Naive thymus-derived CD4-positive, alpha-beta T cell (primary cell): ENCODE measurements at regions of chr1 and their contacts with region 1.

Region 1: GRCh38 chr1:1615256-1616044 is at the start of gene MIB2:
- DNase-seq: peak; percentile 98 to 100 (median 99)
- ATAC-seq: peak; percentile 94
- H3K4me3 ChIP-seq: peak within 1 kb of the TSS; percentile 74
- H3K4me3 Mint-ChIP-seq: peak within 1 kb of the TSS; percentile 93 to 99 (median 96)
- H3K27ac ChIP-seq: peak within 1 kb of the TSS; percentile 100
- H3K27ac Mint-ChIP-seq: peak within 1 kb of the TSS; percentile 94 to 100 (median 99)
- H3K4me1 ChIP-seq: peaks cover 15 to 21% of the 10 kb centered on the region in 2 donors
- H3K4me1 Mint-ChIP-seq: peaks cover 18 to 36% (median 32%) of the 10 kb centered on the region in 7 donors
- H3K27me3 ChIP-seq: no peaks in the 10 kb centered on the region
- H3K27me3 Mint-ChIP-seq: no peaks in the 10 kb centered on the region
- total RNA-seq, gene MIB2: 45.6 to 129 (median 65.7) TPM

Region 2: DNA sequence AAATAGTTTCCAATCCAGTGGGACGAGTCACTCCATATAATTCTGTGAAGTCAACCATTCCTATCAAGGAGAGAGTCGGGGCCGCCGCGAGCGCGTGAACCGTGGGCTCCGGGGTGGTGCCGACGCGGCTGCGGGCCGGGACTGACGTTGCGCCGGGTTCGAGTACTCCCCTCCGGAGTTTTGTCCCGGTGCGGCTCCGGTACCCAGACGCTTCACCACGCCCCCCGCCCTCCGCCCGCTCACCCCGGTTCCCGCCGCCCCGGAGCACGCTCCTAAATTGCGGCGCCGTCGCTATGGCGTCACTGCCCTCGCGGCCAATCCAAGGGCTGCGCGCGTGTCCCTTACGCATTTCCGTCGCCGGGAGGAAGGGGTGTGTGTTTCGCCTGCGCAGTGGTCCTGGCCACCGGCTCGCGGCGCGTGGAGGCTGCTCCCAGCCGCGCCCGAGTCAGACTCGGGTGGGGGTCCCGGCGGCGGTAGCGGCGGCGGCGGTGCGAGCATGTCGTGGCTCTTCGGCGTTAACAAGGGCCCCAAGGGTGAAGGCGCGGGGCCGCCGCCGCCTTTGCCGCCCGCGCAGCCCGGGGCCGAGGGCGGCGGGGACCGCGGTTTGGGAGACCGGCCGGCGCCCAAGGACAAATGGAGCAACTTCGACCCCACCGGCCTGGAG is 143.9 kb before region 1 on chr1 and contains the start of gene ATAD3B:
- CTCF ChIA-PET with region 1: no interaction called
- POLR2A ChIA-PET with region 1: no interaction called
- intact Hi-C with region 1: loop called in 1 of 2 experiments (anchors 2 kb)
- DNase-seq: peak; percentile 80 to 95 (median 88)
- ATAC-seq: peak; percentile 98
- H3K4me3 ChIP-seq: peak within 1 kb of the TSS; percentile 68
- H3K4me3 Mint-ChIP-seq: peak within 1 kb of the TSS; percentile 78 to 97 (median 89)
- H3K27ac ChIP-seq: peak within 1 kb of the TSS; percentile 90
- H3K27ac Mint-ChIP-seq: peak within 1 kb of the TSS; percentile 77 to 98 (median 92)
- H3K4me1 ChIP-seq: peaks cover 9 to 14% of the 10 kb centered on the region in 2 donors
- H3K4me1 Mint-ChIP-seq: peaks cover 6 to 39% (median 25%) of the 10 kb centered on the region in 7 donors
- H3K27me3 ChIP-seq: no peaks in the 10 kb centered on the region
- H3K27me3 Mint-ChIP-seq: no peaks in the 10 kb centered on the region
- total RNA-seq, gene ATAD3B: 42.5 to 53.8 (median 51.7) TPM

Region 3: GRCh38 chr1:1540090-1540817 is 75.2 kb before region 1 on chr1 and contains the start of gene TMEM240:
- CTCF ChIA-PET with region 1: no interaction called
- POLR2A ChIA-PET with region 1: interaction called, 4 read pairs
- intact Hi-C with region 1: loop called in 1 of 2 experiments (anchors 1 kb)
- DNase-seq: peak in 7 of 9 donors; percentile 41 to 55 (median 52)
- ATAC-seq: peak; percentile 75
- H3K4me3 ChIP-seq: no peak within 1 kb of the TSS
- H3K4me3 Mint-ChIP-seq: peak within 1 kb of the TSS; percentile 36 to 83 (median 75)
- H3K27ac ChIP-seq: peak within 1 kb of the TSS; percentile 57
- H3K27ac Mint-ChIP-seq: peak within 1 kb of the TSS in 4 of 9 donors; percentile 32 to 67 (median 59)
- H3K4me1 ChIP-seq: no peaks in the 10 kb centered on the region
- H3K4me1 Mint-ChIP-seq: peaks cover 0 to 11% (median 0%) of the 10 kb centered on the region in 7 donors
- H3K27me3 ChIP-seq: no peaks in the 10 kb centered on the region
- H3K27me3 Mint-ChIP-seq: peaks cover 0 to 4% (median 0%) of the 10 kb centered on the region in 5 donors
- total RNA-seq, gene TMEM240: 0.66 to 2.8 (median 1.7) TPM in 4 of 5 experiments, not detected in the other

Region 4: GRCh38 chr1:1599030-1599919 is 16.2 kb before region 1 on chr1:
- CTCF ChIA-PET with region 1: no interaction called
- POLR2A ChIA-PET with region 1: interaction called, 25 read pairs
- intact Hi-C with region 1: loop called in 1 of 2 experiments (anchors 1 kb)
- DNase-seq: peak in 8 of 9 donors; percentile 20 to 56 (median 50)
- ATAC-seq: peak; percentile 58
- H3K4me3 ChIP-seq: no peak overlapping the region
- H3K4me3 Mint-ChIP-seq: peak overlapping the region; percentile 60 to 90 (median 76)
- H3K27ac ChIP-seq: no peak overlapping the region
- H3K27ac Mint-ChIP-seq: peak overlapping the region in 3 of 9 donors; percentile 56 to 80 (median 62)
- H3K4me1 ChIP-seq: no peaks in the 10 kb centered on the region
- H3K4me1 Mint-ChIP-seq: peaks cover 0 to 13% (median 5%) of the 10 kb centered on the region in 7 donors
- H3K27me3 ChIP-seq: peaks cover 0 to 4% of the 10 kb centered on the region in 2 donors
- H3K27me3 Mint-ChIP-seq: peaks cover 0 to 10% (median 0%) of the 10 kb centered on the region in 5 donors

Region 5: DNA sequence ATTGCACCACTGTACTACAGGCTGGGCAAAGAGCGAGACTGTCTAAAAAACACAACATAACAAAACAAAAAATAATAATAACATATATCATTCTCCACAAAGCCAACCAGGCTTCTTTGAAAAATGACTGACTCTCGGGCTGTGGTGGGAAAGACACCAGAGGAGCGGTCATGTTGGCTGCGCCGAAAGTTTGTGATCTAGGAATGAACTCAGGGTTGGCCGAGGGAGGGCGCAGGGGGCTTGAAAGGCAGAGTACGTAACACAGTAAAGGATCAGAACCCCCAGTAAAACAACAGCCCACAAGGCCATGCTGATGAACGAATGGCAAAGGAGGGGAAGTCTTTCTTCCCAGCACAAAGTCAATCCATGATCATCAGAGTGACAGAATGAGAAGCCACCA is 72.4 kb after region 1 on chr1:
- CTCF ChIA-PET with region 1: no interaction called
- POLR2A ChIA-PET with region 1: no interaction called
- intact Hi-C with region 1: loop called in 1 of 2 experiments (anchors 2 kb)
- DNase-seq: no peak
- ATAC-seq: no peak
- H3K4me3 ChIP-seq: no peak overlapping the region
- H3K4me3 Mint-ChIP-seq: peak overlapping the region in 5 of 10 donors; percentile 11 to 77 (median 39)
- H3K27ac ChIP-seq: peak overlapping the region; percentile 20
- H3K27ac Mint-ChIP-seq: peak overlapping the region in 4 of 9 donors; percentile 3 to 84 (median 62)
- H3K4me1 ChIP-seq: no peaks in the 10 kb centered on the region
- H3K4me1 Mint-ChIP-seq: peaks cover 2 to 64% (median 37%) of the 10 kb centered on the region in 7 donors
- H3K27me3 ChIP-seq: no peaks in the 10 kb centered on the region
- H3K27me3 Mint-ChIP-seq: no peaks in the 10 kb centered on the region

Region 6: DNA sequence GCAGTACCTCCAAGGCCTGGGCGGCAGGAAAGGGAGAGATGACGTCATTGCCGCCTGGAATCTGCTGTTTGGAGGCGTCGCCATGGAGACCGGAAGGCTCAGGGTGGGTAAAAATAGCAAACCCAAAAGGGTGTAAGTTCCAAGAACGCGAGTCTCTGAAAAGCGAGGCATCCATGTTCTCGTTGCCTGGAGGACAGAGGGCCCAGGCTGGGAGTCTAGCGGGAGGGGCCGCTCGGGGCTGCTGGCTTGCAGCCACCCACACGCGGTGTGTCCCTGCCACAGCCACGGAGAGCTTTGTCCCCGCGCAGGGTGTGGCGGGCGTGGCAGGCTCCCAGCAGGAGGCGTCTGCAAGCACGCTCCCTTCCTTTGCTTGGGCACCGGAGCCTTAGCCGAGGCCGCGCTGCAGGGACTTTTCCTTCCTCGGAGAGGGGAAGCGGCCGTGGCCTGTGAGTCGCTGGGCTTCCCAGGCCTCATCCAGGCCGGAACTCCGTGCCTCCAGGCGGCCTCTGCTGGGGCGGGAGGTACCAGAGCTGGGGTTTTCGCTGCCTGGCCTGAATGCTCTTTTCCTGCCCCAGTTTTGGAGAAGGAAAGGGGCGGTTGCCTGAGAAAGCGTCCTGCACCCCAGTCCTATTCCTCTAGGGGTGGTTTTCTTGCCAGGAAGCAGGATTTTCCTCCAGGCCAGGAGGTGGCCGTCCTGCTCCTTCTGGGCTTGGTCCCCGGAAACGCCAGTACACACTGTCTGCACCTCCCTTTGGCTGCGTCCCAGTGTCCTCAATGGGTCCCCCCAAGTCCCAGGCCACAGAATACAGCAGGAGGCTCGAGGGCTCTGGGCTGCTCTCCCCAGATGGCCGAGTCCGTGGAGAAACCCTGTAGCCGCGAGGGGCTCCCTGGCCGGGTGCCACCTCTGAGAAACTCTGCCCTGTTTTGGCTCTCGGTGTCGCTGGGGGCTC is 597.4 kb after region 1 on chr1:
- CTCF ChIA-PET with region 1: no interaction called
- POLR2A ChIA-PET with region 1: no interaction called
- intact Hi-C with region 1: no loop called
- DNase-seq: peak in 8 of 9 donors; percentile 44 to 71 (median 66)
- ATAC-seq: peak; percentile 79
- H3K4me3 ChIP-seq: peak overlapping the region; percentile 41
- H3K4me3 Mint-ChIP-seq: peak overlapping the region in 6 of 10 donors; percentile 17 to 74 (median 53)
- H3K27ac ChIP-seq: peak overlapping the region; percentile 46
- H3K27ac Mint-ChIP-seq: peak overlapping the region in 7 of 9 donors; percentile 17 to 70 (median 39)
- H3K4me1 ChIP-seq: peaks cover 8 to 13% of the 10 kb centered on the region in 2 donors
- H3K4me1 Mint-ChIP-seq: peaks cover 0 to 11% (median 2%) of the 10 kb centered on the region in 7 donors
- H3K27me3 ChIP-seq: no peaks in the 10 kb centered on the region
- H3K27me3 Mint-ChIP-seq: no peaks in the 10 kb centered on the region